CD8-positive, alpha-beta memory T cell (primary cell): ENCODE measurements at regions of chr17 and their contacts with region 1.

Region 1: DNA sequence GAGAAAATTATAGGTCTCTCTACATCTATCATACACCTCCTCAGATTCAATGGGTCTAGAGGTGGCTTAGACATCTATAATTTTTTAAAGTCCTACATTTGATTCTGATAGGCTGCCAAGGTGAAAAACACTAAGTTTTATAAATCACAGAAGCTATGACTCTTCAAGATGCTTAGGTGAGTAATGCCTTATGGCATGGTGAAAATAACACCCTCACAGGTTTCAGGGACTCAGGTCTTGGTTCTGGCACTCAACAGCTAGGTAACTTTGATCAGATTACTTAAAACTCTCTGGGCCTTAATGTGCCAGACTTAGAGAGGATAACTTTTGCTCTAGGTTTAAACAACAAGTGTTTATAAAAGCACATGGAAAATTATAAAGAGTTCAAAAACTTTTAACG is 2.0 kb upstream of the COX10 start:
- DNase-seq: no peak
- H3K4me3 ChIP-seq: no peak overlapping the region
- H3K4me3 Mint-ChIP-seq: no peak overlapping the region
- H3K27ac ChIP-seq: no peak overlapping the region
- H3K27ac Mint-ChIP-seq: no peak overlapping the region
- H3K4me1 ChIP-seq: peaks cover 24% of the 10 kb centered on the region
- H3K4me1 Mint-ChIP-seq: peaks cover 39 to 49% (median 44%) of the 10 kb centered on the region in 3 donors
- H3K27me3 ChIP-seq: no peaks in the 10 kb centered on the region
- H3K27me3 Mint-ChIP-seq: no peaks in the 10 kb centered on the region

Region 2: DNA sequence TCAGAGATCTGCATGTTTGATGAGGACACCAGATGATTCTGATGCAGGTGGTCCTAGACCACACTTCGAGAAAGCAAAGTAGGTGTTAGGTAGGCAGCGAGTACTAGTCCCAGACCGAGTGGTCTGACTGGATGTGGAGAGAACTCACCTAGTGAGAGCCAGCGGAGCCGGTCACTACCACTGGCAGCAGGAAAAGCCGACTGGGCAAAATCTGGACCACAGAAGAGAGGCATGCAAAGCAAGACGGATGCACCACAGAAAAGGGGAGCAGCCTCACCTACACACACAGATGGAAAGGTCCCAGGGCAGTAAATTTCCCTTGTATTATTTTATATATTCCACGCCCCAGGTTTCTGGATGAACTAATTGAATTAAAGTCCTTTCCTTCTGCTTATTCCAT is 15.5 kb after region 1 on chr17:
- CTCF ChIA-PET with region 1: no interaction called
- POLR2A ChIA-PET with region 1: no interaction called
- DNase-seq: no peak
- H3K4me3 ChIP-seq: no peak overlapping the region
- H3K4me3 Mint-ChIP-seq: no peak overlapping the region
- H3K27ac ChIP-seq: no peak overlapping the region
- H3K27ac Mint-ChIP-seq: no peak overlapping the region
- H3K4me1 ChIP-seq: no peaks in the 10 kb centered on the region
- H3K4me1 Mint-ChIP-seq: peaks cover 16 to 62% (median 34%) of the 10 kb centered on the region in 3 donors
- H3K27me3 ChIP-seq: no peaks in the 10 kb centered on the region
- H3K27me3 Mint-ChIP-seq: no peaks in the 10 kb centered on the region

Region 3: GRCh38 chr17:14098224-14098623 is 30.9 kb after region 1 on chr17:
- CTCF ChIA-PET with region 1: no interaction called
- POLR2A ChIA-PET with region 1: interaction called, 15 read pairs
- DNase-seq: no peak
- H3K4me3 ChIP-seq: no peak overlapping the region
- H3K4me3 Mint-ChIP-seq: no peak overlapping the region
- H3K27ac ChIP-seq: no peak overlapping the region
- H3K27ac Mint-ChIP-seq: no peak overlapping the region
- H3K4me1 ChIP-seq: no peaks in the 10 kb centered on the region
- H3K4me1 Mint-ChIP-seq: peaks cover 12 to 32% (median 15%) of the 10 kb centered on the region in 3 donors
- H3K27me3 ChIP-seq: no peaks in the 10 kb centered on the region
- H3K27me3 Mint-ChIP-seq: no peaks in the 10 kb centered on the region